Activated CD8-positive, alpha-beta memory T cell treated with anti-CD3 and anti-CD28 coated beads, Interleukin-2, amount 10 ng/mL, durations not matched to agents 7 days and 5 days (primary cell): ENCODE measurements at regions of chr22 and their contacts with region 1.

Region 1: DNA sequence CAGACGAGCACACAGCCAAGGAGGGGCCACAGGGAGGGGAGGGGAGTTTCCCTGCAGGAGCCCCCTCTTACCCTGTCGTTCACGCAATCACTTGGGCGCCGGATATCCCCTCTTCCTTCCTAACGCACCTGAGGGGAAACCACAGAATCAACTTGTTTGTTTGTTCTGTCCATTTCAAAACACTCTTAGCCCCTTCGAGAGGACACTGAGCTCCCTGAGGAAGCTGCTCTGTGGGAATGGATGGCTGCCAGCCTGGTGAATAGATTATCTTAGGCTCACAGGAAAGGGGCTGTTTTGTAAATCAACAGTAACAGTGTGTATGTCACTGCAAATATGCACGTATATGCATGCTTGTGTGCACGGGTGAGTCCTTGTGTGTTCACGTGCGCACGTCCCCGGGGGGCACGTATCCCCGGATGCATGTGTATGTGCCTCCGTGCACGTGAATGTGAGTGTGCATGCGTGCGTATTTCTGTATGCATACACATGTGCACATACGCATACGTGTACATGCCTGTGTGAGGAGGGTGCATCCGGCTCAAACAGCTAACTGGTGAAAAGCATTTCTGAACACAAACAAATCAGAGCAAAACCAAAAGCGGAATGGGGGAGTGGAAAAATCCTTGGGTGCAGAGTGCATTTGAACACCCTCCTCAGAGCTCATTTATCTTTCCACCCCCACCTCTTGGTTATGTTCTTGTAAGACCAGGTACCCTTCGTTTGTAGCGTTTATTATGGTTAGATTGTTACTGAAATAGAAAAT is 7.2 kb downstream of the ARSA start:
- DNase-seq: peak; percentile 91
- ATAC-seq: peak; percentile 74
- H3K4me3 Mint-ChIP-seq: peak overlapping the region; percentile 79
- H3K27ac Mint-ChIP-seq: peak overlapping the region; percentile 100
- H3K4me1 Mint-ChIP-seq: peaks cover 41% of the 10 kb centered on the region
- H3K27me3 Mint-ChIP-seq: no peaks in the 10 kb centered on the region

Region 2: DNA sequence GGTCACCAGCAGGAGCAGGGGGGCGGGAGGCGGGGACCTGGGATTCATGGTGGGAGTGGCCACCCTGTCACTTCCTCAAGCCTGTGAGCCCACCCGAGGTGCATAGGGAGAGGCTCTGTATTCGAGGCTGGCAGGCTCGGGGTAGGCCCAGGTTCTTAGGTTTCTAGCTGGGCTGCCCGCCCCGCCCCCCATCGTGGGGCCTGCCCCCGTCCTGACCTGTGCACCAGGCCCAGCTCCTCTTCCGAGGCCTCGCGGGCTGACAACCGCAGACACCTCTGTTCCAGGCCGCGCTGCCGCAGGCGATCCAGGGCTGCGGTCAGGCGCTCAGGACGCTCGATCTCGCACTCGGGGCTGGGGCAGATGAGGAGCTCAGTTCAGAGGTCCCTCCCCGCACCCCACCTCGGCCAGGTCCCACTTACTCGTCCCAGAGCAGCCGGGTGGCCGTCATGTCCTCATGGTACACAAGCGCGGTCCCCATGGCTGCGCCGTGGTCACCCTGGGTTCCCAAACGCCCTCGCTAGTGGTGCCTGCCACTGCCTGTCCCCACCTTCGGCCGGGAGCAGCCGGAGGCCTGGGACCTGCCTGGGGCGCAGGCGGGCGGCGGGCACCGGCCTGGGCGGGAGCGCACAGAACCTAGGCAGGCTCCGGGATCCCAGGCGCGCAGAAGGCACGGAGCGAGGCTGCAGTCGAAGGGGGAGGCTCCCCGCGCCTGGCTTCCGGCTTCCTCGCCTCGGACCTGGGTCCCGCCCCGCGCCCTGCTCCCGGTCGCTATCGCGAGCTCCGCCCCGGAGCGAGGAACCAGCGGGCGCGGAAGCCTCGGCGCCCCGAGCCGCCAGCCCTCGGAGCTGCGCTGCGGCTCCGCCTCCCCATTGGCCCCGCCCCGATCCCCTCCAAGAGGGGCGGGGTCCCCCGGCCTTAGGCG is 370.0 kb before region 1 on chr22 and contains the start of gene HDAC10:
- CTCF ChIA-PET with region 1: interaction called, 20 read pairs
- DNase-seq: peak; percentile 92
- ATAC-seq: peak; percentile 88
- H3K4me3 Mint-ChIP-seq: peak within 1 kb of the TSS; percentile 84
- H3K27ac Mint-ChIP-seq: peak within 1 kb of the TSS; percentile 85
- H3K4me1 Mint-ChIP-seq: peaks cover 27% of the 10 kb centered on the region
- H3K27me3 Mint-ChIP-seq: no peaks in the 10 kb centered on the region
- total RNA-seq, gene HDAC10: 75.2 to 96.3 TPM

Region 3: GRCh38 chr22:50469377-50470305 is 151.1 kb before region 1 on chr22:
- CTCF ChIA-PET with region 1: interaction called, 16 read pairs
- DNase-seq: peak; percentile 99
- ATAC-seq: peak; percentile 77
- H3K4me3 Mint-ChIP-seq: peak overlapping the region; percentile 69
- H3K27ac Mint-ChIP-seq: peak overlapping the region; percentile 88
- H3K4me1 Mint-ChIP-seq: peaks cover 69% of the 10 kb centered on the region
- H3K27me3 Mint-ChIP-seq: no peaks in the 10 kb centered on the region

Region 4: GRCh38 chr22:50507991-50508884 is 112.5 kb before region 1 on chr22 and contains the start of gene NCAPH2:
- CTCF ChIA-PET with region 1: interaction called, 21 read pairs
- DNase-seq: peak; percentile 98
- ATAC-seq: peak; percentile 74
- H3K4me3 Mint-ChIP-seq: peak within 1 kb of the TSS; percentile 98
- H3K27ac Mint-ChIP-seq: peak within 1 kb of the TSS; percentile 93
- H3K4me1 Mint-ChIP-seq: peaks cover 37% of the 10 kb centered on the region
- H3K27me3 Mint-ChIP-seq: no peaks in the 10 kb centered on the region
- total RNA-seq, gene NCAPH2: 136 to 181 TPM

Region 5: GRCh38 chr22:50530877-50531545 is 89.8 kb before region 1 on chr22:
- CTCF ChIA-PET with region 1: interaction called, 81 read pairs
- DNase-seq: peak; percentile 95
- ATAC-seq: peak; percentile 49
- H3K4me3 Mint-ChIP-seq: peak overlapping the region; percentile 94
- H3K27ac Mint-ChIP-seq: peak overlapping the region; percentile 100
- H3K4me1 Mint-ChIP-seq: peaks cover 52% of the 10 kb centered on the region
- H3K27me3 Mint-ChIP-seq: no peaks in the 10 kb centered on the region

Region 6: DNA sequence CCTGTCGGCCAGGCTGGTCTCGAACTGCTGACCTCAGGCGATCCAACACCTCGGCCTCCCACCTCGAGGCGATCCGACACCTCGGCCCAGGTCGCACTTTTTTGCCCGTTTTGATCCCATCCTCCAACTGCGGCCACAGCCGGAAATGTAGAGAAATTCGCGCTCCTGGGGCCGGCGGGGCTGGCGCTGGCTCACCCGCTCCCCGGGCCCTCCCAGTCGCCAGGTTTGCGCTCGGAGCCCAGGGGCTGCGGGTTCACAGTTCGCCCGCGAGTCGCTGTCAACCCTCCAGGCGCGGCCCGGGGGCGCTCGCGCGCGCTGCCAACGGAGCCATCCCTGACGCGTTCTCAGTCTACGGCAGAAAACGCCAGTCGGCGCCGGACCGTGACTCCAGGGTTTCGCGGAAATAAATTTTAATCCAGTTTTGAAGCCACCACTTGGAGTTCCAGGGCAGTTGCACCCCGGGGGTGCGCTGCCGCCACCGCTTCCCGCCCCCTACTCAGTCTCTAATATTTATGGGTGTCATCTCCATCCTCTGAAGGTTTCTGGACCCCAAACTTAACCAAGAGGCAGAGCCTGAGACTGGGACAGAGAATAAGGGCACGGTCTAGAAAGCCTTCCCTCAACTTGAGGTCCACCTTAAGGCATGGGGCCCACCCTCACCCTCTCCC is 76.6 kb before region 1 on chr22:
- CTCF ChIA-PET with region 1: interaction called, 33 read pairs
- DNase-seq: peak; percentile 93
- ATAC-seq: peak; percentile 51
- H3K4me3 Mint-ChIP-seq: peak overlapping the region; percentile 49
- H3K27ac Mint-ChIP-seq: peak overlapping the region; percentile 92
- H3K4me1 Mint-ChIP-seq: peaks cover 65% of the 10 kb centered on the region
- H3K27me3 Mint-ChIP-seq: no peaks in the 10 kb centered on the region

Region 7: GRCh38 chr22:50576070-50576469 is 44.7 kb before region 1 on chr22:
- CTCF ChIA-PET with region 1: interaction called, 27 read pairs
- DNase-seq: no peak
- ATAC-seq: no peak
- H3K4me3 Mint-ChIP-seq: no peak overlapping the region
- H3K27ac Mint-ChIP-seq: no peak overlapping the region
- H3K4me1 Mint-ChIP-seq: peaks cover 14% of the 10 kb centered on the region
- H3K27me3 Mint-ChIP-seq: no peaks in the 10 kb centered on the region